ENCODE measurements at regions of chr20 and their contacts with region 1.

Region 1: GRCh38 chr20:32779500-32780211 is 17.5 kb downstream of the DNMT3B start:
- DNase-seq: peak in 2 of 10 donors; percentile 44 to 75

Region 2: DNA sequence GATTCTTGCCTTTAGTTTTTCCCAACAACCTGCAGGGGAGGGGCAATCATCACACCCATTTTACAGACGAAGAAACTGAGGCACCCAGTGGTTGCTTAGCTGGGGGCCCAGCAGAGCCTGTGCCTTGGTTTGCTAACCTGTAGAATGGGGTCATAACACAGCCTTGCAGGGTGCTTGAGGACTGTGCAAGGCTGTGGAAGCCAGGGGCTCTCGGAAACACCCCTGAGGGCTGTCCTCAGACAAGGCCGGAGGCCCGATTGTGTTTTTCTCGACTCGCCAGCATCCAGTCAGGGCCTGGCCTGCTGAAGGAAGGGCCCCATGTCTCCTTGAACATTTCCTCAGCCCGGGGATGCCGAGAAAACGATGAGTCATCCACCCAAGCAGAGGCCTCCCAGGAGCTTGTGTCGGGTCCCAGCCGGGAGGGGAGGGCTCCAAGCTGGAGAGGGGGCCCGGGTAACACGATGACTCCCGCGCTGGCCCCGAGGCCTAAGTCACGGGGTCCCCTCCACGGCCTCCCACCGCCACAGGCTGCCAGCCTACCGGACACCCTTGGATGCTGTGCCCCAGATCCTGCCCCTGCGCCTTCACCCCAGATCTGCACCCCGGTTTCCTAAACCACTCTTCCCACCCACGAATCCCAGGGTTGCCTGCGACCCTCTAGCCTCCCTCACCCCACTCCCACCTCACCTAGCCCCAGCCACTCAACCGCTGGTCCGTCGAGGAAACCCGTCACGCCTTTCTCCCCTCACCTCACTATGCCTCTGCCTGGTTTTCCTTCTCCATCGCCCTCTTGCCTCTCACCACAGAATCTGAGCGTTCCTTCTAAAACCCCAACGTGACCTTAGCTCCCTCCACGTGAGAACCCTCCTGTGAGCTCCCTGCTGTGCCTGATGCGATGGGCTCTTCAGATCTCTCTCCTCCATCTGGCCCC is 205.1 kb before region 1 on chr20:
- intact Hi-C with region 1: no loop called
- DNase-seq: peak in 5 of 10 donors; percentile 46 to 91 (median 85)

Region 3: GRCh38 chr20:32674362-32674789 is 105.3 kb before region 1 on chr20:
- intact Hi-C with region 1: loop called (anchors 10 kb)
- DNase-seq: peak in 3 of 10 donors; percentile 25 to 54 (median 26)

Measured in posterior cingulate gyrus (tissue), 11 donors.